Common myeloid progenitor, CD34-positive (primary cell): ENCODE measurements at regions of chr11 and their contacts with region 1.

Region 1: GRCh38 chr11:62841361-62842184 is 2.2 kb upstream of the WDR74 start:
- DNase-seq: peak; percentile 93 to 98 (median 98)
- H3K4me3 ChIP-seq: peak overlapping the region; percentile 44 to 99 (median 64)
- H3K27ac ChIP-seq: peak overlapping the region; percentile 98 to 99
- H3K4me1 ChIP-seq: peaks cover 8 to 37% (median 25%) of the 10 kb centered on the region in 4 experiments
- H3K27me3 ChIP-seq: no peaks in the 10 kb centered on the region

Region 2: DNA sequence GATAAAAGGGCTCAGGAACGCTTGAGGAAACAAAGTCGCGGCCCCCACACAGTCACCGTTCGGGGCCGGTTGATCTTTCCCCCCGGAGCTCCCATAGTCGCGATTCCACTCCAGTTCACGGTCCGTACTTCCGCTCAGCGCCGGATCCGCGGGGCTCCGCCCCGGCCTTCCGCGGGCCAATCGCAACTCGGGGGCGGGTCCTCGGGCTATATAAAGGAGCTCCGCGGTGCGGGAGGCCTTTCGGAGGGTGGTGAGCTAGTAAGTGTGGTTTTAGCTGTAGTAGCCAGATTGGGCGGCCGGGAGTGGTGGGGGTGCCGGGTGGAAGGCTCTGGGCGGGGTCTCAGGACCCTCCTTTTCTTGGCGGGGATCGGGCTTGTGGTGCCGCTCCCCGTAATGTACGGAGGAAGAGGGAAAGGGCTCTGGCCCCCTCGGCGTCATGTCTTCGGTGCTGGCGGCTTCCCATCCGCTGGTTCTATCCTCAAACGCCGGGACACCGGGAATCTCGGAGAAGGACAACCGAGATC is 176.4 kb before region 1 on chr11 and contains the starts of genes C11orf98 and CSKMT:
- CTCF ChIA-PET with region 1: no interaction called
- POLR2A ChIA-PET with region 1: interaction called, 10 read pairs
- DNase-seq: peak; percentile 94 to 97 (median 97)
- H3K4me3 ChIP-seq: peak within 1 kb of the TSS; percentile 79 to 99 (median 94)
- H3K27ac ChIP-seq: peak within 1 kb of the TSS; percentile 66 to 87
- H3K4me1 ChIP-seq: peaks cover 4 to 38% (median 28%) of the 10 kb centered on the region in 4 experiments
- H3K27me3 ChIP-seq: no peaks in the 10 kb centered on the region

Region 3: GRCh38 chr11:62753736-62754603 is 87.6 kb before region 1 on chr11 and contains the start of gene ZBTB3:
- CTCF ChIA-PET with region 1: no interaction called
- POLR2A ChIA-PET with region 1: interaction called, 15 read pairs
- DNase-seq: peak; percentile 100
- H3K4me3 ChIP-seq: peak within 1 kb of the TSS; percentile 80 to 97 (median 92)
- H3K27ac ChIP-seq: peak within 1 kb of the TSS; percentile 90 to 91
- H3K4me1 ChIP-seq: peaks cover 4 to 20% (median 12%) of the 10 kb centered on the region in 4 experiments
- H3K27me3 ChIP-seq: no peaks in the 10 kb centered on the region

Region 4: GRCh38 chr11:62805076-62805892 is 36.3 kb before region 1 on chr11 and contains the start of gene NXF1:
- CTCF ChIA-PET with region 1: no interaction called
- POLR2A ChIA-PET with region 1: interaction called, 15 read pairs
- DNase-seq: peak; percentile 93 to 97 (median 96)
- H3K4me3 ChIP-seq: peak within 1 kb of the TSS; percentile 82 to 99 (median 93)
- H3K27ac ChIP-seq: peak within 1 kb of the TSS; percentile 79 to 91
- H3K4me1 ChIP-seq: peaks cover 11 to 45% (median 24%) of the 10 kb centered on the region in 4 experiments
- H3K27me3 ChIP-seq: no peaks in the 10 kb centered on the region

Region 5: GRCh38 chr11:62860835-62861563 is 19.4 kb after region 1 on chr11:
- CTCF ChIA-PET with region 1: interaction called, 5 read pairs
- POLR2A ChIA-PET with region 1: interaction called, 121 read pairs
- DNase-seq: no peak
- H3K4me3 ChIP-seq: no peak overlapping the region
- H3K27ac ChIP-seq: no peak overlapping the region
- H3K4me1 ChIP-seq: peaks cover 4 to 45% (median 16%) of the 10 kb centered on the region in 4 experiments
- H3K27me3 ChIP-seq: no peaks in the 10 kb centered on the region